Activated CD4-positive, alpha-beta memory T cell treated with anti-CD3 and anti-CD28 coated beads for 36 hours (primary cell): ENCODE measurements at regions of chr20 and their contacts with region 1.

Region 1: GRCh38 chr20:32207626-32208498 is at the starts of genes PLAGL2 and POFUT1:
- DNase-seq: peak; percentile 93
- H3K4me3 Mint-ChIP-seq: peak within 1 kb of the TSS; percentile 99
- H3K27ac Mint-ChIP-seq: peak within 1 kb of the TSS; percentile 95
- H3K4me1 Mint-ChIP-seq: peaks cover 65% of the 10 kb centered on the region
- H3K27me3 Mint-ChIP-seq: no peaks in the 10 kb centered on the region
- total RNA-seq, gene PLAGL2: 93.9 to 95.6 TPM
- total RNA-seq, gene POFUT1: 48.4 to 48.5 TPM

Region 2: GRCh38 chr20:32109392-32110172 is 98.3 kb before region 1 on chr20 and contains the start of gene TM9SF4:
- CTCF ChIA-PET with region 1: no interaction called
- POLR2A ChIA-PET with region 1: interaction called, 7 read pairs
- intact Hi-C with region 1: loop called (anchors 5 kb)
- DNase-seq: peak; percentile 92
- H3K4me3 Mint-ChIP-seq: peak within 1 kb of the TSS; percentile 89
- H3K27ac Mint-ChIP-seq: peak within 1 kb of the TSS; percentile 93
- H3K4me1 Mint-ChIP-seq: peaks cover 36% of the 10 kb centered on the region
- H3K27me3 Mint-ChIP-seq: no peaks in the 10 kb centered on the region
- total RNA-seq, gene TM9SF4: 35.8 to 37.3 TPM

Region 3: DNA sequence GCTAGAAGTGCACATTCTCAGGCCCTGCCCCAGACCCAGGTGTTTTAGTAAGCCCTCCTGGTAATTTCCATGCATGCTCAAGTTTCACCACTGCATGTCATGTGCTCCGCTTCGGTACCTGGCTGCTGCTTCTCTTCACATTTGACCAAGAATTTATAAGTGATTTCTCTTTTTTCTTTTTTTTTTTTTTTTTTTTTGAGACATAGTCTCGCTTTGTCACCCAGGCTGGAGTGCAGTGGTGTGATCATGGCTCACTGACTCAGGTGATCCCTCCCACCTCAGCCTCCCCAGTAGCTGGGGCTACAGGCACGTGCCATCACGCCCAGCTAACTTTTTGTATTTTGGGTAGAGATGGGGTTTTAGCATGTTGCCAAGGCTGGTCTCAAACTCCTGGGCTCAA is 82.4 kb before region 1 on chr20:
- CTCF ChIA-PET with region 1: no interaction called
- POLR2A ChIA-PET with region 1: no interaction called
- intact Hi-C with region 1: no loop called
- DNase-seq: no peak
- H3K4me3 Mint-ChIP-seq: no peak overlapping the region
- H3K27ac Mint-ChIP-seq: no peak overlapping the region
- H3K4me1 Mint-ChIP-seq: peaks cover 5% of the 10 kb centered on the region
- H3K27me3 Mint-ChIP-seq: no peaks in the 10 kb centered on the region

Region 4: DNA sequence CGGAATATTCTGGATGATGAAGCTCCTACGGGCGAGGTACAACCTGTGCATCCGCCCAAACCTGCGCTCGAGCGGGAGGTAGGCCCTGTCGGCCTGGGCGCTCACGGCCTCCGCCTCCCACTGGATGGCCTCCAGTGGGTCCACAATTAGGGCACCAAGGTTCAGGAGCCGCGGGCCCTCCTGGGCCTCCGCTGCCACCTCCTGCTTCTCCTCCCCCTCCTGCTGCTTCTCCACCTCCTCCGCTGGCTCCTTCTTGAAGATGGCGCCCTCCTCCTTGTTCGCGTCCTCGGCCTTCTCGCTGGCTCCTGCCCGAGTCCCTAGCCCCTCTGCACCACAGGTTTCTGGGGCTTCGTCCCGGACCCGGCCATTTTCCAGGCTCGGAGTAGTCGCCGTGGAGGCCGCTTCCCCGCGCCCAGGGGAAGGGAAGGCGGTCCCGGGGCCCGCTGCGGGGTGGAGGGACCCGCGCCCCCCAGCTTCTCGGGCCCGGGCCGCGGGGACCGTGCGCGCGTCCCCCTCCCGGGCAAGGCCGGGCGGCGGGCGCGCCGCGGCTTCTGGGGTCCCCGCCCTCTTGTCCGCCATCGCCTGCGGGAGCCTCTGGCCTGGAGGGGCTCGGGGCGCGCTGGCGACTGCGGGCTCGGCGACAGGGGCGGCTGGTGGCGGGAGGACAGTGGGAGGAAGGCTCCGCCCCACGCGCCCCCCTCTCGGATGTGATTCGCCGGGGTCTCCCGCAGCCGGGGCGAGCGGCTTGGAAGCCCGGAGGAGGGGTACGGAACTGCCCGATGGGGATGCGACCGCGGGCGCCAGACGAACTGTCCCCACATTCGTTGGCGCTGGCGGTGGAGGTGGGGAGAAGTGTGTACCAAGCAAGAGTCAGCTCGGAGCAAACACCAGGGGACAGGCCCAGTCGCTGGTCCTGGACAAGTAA is 17.9 kb before region 1 on chr20:
- CTCF ChIA-PET with region 1: interaction called, 4 read pairs
- POLR2A ChIA-PET with region 1: interaction called, 16 read pairs
- intact Hi-C with region 1: no loop called
- DNase-seq: peak; percentile 68
- H3K4me3 Mint-ChIP-seq: peak overlapping the region; percentile 71
- H3K27ac Mint-ChIP-seq: peak overlapping the region; percentile 54
- H3K4me1 Mint-ChIP-seq: peaks cover 43% of the 10 kb centered on the region
- H3K27me3 Mint-ChIP-seq: no peaks in the 10 kb centered on the region

Region 5: GRCh38 chr20:32249030-32249738 is 41.3 kb after region 1 on chr20:
- CTCF ChIA-PET with region 1: no interaction called
- POLR2A ChIA-PET with region 1: interaction called, 10 read pairs
- intact Hi-C with region 1: loop called (anchors 1 kb)
- DNase-seq: peak; percentile 55
- H3K4me3 Mint-ChIP-seq: no peak overlapping the region
- H3K27ac Mint-ChIP-seq: peak overlapping the region; percentile 89
- H3K4me1 Mint-ChIP-seq: peaks cover 55% of the 10 kb centered on the region
- H3K27me3 Mint-ChIP-seq: no peaks in the 10 kb centered on the region

Region 6: DNA sequence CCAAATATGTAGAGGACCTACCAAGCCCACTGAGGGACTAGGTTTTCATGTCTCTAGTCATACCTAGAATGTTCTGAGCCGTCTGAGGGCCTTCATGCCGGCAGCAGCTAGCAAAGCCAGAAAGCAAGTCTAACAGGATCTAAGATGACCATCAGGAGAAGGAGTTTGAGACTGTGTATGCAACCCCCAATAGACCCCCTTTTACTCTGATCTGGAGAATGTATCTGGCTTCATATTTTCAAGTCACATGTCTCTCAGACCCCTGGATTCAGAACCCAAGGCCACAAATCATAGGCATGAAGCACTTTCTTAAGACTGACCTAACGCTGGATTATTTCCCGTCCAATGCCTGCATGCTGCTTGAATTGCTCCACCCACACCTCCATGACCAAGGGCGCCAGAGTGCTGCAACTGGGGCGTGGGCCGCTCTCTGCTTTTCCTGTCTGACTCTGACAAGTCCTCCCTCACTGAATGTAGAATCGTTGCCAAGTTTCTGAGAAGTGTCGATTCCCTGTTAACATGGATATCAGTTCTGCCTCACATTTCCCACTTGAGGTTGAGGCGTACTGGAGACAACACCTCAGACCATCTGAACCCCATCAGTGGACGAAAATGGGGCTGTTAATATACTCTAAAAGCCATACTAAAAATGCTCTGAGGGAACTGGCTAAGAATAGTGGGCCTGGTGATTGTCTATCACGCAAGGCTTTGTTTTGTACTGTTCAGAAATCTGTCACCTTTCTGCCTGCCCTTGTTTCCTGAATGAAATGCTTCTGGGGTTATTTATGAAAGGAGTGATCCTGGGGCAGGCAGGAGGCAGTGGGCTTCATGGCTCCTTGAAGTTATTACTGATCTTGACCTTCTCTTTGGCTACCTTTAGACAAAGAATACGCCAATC is 126.4 kb after region 1 on chr20:
- CTCF ChIA-PET with region 1: no interaction called
- POLR2A ChIA-PET with region 1: interaction called, 10 read pairs
- intact Hi-C with region 1: loop called (anchors 1 kb)
- DNase-seq: peak; percentile 84
- H3K4me3 Mint-ChIP-seq: peak overlapping the region; percentile 37
- H3K27ac Mint-ChIP-seq: peak overlapping the region; percentile 92
- H3K4me1 Mint-ChIP-seq: peaks cover 57% of the 10 kb centered on the region
- H3K27me3 Mint-ChIP-seq: no peaks in the 10 kb centered on the region

Region 7: GRCh38 chr20:32585011-32585518 is 377.2 kb after region 1 on chr20 and contains the start of gene NOL4L:
- CTCF ChIA-PET with region 1: no interaction called
- POLR2A ChIA-PET with region 1: no interaction called
- intact Hi-C with region 1: loop called (anchors 5 kb)
- DNase-seq: peak; percentile 58
- H3K4me3 Mint-ChIP-seq: peak within 1 kb of the TSS; percentile 78
- H3K27ac Mint-ChIP-seq: peak within 1 kb of the TSS; percentile 56
- H3K4me1 Mint-ChIP-seq: peaks cover 31% of the 10 kb centered on the region
- H3K27me3 Mint-ChIP-seq: peaks cover 3% of the 10 kb centered on the region
- total RNA-seq, gene NOL4L: 21.8 to 22.1 TPM

Region 8: GRCh38 chr20:32762149-32762753 is 554.4 kb after region 1 on chr20 and contains the start of gene DNMT3B:
- CTCF ChIA-PET with region 1: no interaction called
- POLR2A ChIA-PET with region 1: no interaction called
- intact Hi-C with region 1: no loop called
- DNase-seq: peak; percentile 81
- H3K4me3 Mint-ChIP-seq: peak within 1 kb of the TSS; percentile 79
- H3K27ac Mint-ChIP-seq: no peak within 1 kb of the TSS
- H3K4me1 Mint-ChIP-seq: peaks cover 9% of the 10 kb centered on the region
- H3K27me3 Mint-ChIP-seq: peaks cover 1% of the 10 kb centered on the region
- total RNA-seq, gene DNMT3B: 1.7 to 2.0 TPM